Activated B cell treated with CpG ODN at 0.5 μM for 24 hours (primary cell): ENCODE measurements at regions of chr11 and their contacts with region 1.

Region 1: GRCh38 chr11:102451681-102452460 is 694 bp downstream of the TMEM123 start:
- DNase-seq: peak; percentile 61
- ATAC-seq: peak; percentile 57
- H3K4me3 Mint-ChIP-seq: peak overlapping the region; percentile 98
- H3K27ac Mint-ChIP-seq: peak overlapping the region; percentile 99
- H3K4me1 Mint-ChIP-seq: peaks cover 69% of the 10 kb centered on the region
- H3K27me3 Mint-ChIP-seq: no peaks in the 10 kb centered on the region
- CTCF ChIP-seq: no peak

Region 2: GRCh38 chr11:101914738-101915426 is 537.0 kb before region 1 on chr11 and contains the start of gene CEP126:
- CTCF ChIA-PET with region 1: no interaction called
- POLR2A ChIA-PET with region 1: interaction called, 3 read pairs
- intact Hi-C with region 1: loop called (anchors 10 kb)
- DNase-seq: peak; percentile 98
- ATAC-seq: peak; percentile 90
- H3K4me3 Mint-ChIP-seq: peak within 1 kb of the TSS; percentile 94
- H3K27ac Mint-ChIP-seq: peak within 1 kb of the TSS; percentile 95
- H3K4me1 Mint-ChIP-seq: peaks cover 27% of the 10 kb centered on the region
- H3K27me3 Mint-ChIP-seq: peaks cover 10% of the 10 kb centered on the region
- CTCF ChIP-seq: no peak
- total RNA-seq, gene CEP126: 1.4 and 1.5 TPM in 2 replicates

Region 3: GRCh38 chr11:102317099-102317767 is 134.6 kb before region 1 on chr11 and contains the start of gene BIRC3:
- CTCF ChIA-PET with region 1: no interaction called
- POLR2A ChIA-PET with region 1: interaction called, 7 read pairs
- intact Hi-C with region 1: loop called (anchors 1 kb)
- DNase-seq: peak; percentile 82
- ATAC-seq: peak; percentile 84
- H3K4me3 Mint-ChIP-seq: peak within 1 kb of the TSS; percentile 98
- H3K27ac Mint-ChIP-seq: peak within 1 kb of the TSS; percentile 98
- H3K4me1 Mint-ChIP-seq: peaks cover 77% of the 10 kb centered on the region
- H3K27me3 Mint-ChIP-seq: no peaks in the 10 kb centered on the region
- CTCF ChIP-seq: no peak
- total RNA-seq, gene BIRC3: 236 and 270 TPM in 2 replicates

Region 4: DNA sequence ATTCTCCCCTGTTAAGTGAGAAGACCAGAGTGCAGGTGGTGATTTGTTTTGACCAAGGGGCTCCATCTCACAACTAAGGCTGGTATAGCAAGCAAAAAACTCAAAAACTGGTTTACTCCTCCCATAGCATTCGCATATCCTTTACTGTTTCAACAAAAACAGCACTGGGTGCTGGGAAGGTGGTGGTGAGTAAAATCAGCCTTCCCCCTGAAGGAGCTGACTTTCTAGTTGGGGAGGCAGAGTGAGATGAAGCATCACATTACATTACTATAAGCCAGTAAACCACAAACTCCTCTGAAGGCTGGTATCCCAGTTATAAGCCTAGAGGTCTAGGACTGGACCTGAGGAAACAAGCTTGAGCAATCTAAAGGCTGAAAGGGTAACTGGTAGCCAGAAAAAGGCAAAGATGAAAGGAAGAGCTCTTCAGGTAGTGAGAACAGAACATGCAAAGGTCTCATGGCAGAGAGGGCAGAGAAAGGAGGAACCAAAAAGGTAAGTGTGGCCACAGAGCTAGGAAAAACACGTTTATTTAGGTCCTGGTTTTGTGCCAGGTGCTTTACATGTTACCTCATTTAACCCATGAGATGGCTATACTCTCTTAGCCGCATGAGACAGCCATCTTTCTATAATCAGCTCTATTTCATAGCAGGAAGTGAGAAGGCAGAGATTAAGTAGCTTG is 21.6 kb before region 1 on chr11:
- CTCF ChIA-PET with region 1: no interaction called
- POLR2A ChIA-PET with region 1: interaction called, 14 read pairs
- intact Hi-C with region 1: loop called (anchors 1 kb)
- DNase-seq: no peak
- ATAC-seq: peak; percentile 84
- H3K4me3 Mint-ChIP-seq: peak overlapping the region; percentile 39
- H3K27ac Mint-ChIP-seq: peak overlapping the region; percentile 72
- H3K4me1 Mint-ChIP-seq: peaks cover 56% of the 10 kb centered on the region
- H3K27me3 Mint-ChIP-seq: no peaks in the 10 kb centered on the region
- CTCF ChIP-seq: no peak

Region 5: GRCh38 chr11:102464859-102465500 is 13.1 kb after region 1 on chr11:
- CTCF ChIA-PET with region 1: no interaction called
- POLR2A ChIA-PET with region 1: interaction called, 5 read pairs
- intact Hi-C with region 1: loop called (anchors 1 kb)
- DNase-seq: no peak
- ATAC-seq: peak; percentile 31
- H3K4me3 Mint-ChIP-seq: peak overlapping the region; percentile 35
- H3K27ac Mint-ChIP-seq: peak overlapping the region; percentile 47
- H3K4me1 Mint-ChIP-seq: peaks cover 53% of the 10 kb centered on the region
- H3K27me3 Mint-ChIP-seq: no peaks in the 10 kb centered on the region
- CTCF ChIP-seq: no peak

Region 6: DNA sequence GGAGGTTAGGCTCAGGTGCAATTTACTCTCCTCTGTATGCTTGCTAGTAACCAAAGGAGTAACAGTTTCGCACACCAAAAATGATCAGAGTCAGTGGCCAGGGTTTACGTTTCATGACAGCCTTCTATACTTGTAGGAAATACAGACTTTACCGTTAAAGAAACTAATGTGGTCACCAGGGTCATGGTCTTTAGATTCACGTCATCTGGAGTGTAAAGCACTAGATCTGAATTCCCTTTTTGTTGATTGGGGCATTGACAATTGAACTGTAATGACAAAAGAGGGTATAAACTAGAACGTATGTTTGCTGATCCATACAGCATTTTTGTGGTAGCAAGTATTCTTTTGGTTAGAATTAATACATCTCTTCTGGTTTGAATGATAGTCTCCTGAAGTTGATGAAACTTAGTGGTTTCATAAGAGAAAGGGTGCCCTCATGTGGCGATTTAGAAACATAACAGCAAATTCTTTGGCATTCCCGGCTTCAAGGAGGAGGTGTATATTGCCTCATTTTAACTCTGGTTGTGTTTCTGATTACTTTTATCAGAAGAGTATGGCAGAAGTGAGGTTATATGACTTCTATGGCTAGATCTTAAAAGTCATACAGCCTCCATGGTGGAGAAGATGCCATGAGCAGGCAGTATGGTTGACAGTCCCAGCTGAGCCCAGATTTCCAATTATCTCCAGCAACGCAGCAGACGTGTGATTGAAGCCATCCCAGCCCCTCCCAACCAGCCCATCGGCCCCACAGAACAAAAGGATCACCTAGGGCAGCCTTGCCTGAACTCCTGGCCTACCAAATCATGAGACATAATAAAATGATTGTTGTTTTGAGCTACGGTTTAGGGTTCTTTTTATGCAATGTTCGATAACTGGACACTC is 43.5 kb after region 1 on chr11:
- CTCF ChIA-PET with region 1: interaction called, 7 read pairs
- POLR2A ChIA-PET with region 1: interaction called, 6 read pairs
- intact Hi-C with region 1: loop called (anchors 1 kb)
- DNase-seq: no peak
- ATAC-seq: peak; percentile 77
- H3K4me3 Mint-ChIP-seq: no peak overlapping the region
- H3K27ac Mint-ChIP-seq: peak overlapping the region; percentile 53
- H3K4me1 Mint-ChIP-seq: peaks cover 17% of the 10 kb centered on the region
- H3K27me3 Mint-ChIP-seq: no peaks in the 10 kb centered on the region
- CTCF ChIP-seq: no peak